Activated CD4-positive, alpha-beta T cell treated with anti-CD3 and anti-CD28 coated beads for 36 hours (primary cell): ENCODE measurements at regions of chr15 and their contacts with region 1.

Region 1: DNA sequence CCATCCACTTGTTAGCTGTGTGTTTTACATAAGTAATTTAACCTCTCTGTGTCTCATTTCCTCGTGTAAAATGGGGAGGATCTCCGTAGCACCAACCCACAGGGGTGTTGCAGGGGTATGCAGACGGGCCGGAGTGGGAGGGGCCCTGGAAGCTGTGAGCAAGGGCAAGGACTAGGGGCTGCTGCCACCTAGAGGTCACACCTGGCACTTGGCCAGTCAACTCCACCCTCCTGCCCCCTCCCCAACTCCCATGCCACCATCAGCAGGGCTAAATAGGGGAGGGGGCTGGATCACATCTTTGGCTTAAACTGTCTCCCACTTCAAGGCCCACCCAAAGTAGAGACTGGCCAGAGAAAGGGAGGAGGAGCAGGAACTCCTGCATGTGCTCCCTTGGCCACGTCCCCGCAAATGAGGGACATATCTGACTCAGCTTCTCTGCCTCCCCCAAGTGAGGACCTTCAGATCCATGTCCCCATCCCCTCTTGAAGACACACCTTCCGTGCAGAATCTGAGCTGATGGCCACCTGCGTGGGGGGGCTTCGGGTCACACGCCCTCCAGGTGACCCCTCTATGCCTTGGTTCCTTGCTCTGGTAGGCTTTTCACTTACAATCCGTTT is 2.6 kb downstream of the CCDC9B start:
- DNase-seq: peak; percentile 90
- ATAC-seq: peak; percentile 90
- H3K4me3 Mint-ChIP-seq: no peak overlapping the region
- H3K27ac Mint-ChIP-seq: no peak overlapping the region
- H3K4me1 Mint-ChIP-seq: peaks cover 16% of the 10 kb centered on the region
- H3K27me3 Mint-ChIP-seq: no peaks in the 10 kb centered on the region

Region 2: GRCh38 chr15:40307421-40308211 is 30.5 kb before region 1 on chr15 and contains the start of gene PLCB2:
- CTCF ChIA-PET with region 1: interaction called, 87 read pairs
- POLR2A ChIA-PET with region 1: no interaction called
- intact Hi-C with region 1: loop called (anchors 1 to 2 kb)
- DNase-seq: peak; percentile 83
- ATAC-seq: peak; percentile 79
- H3K4me3 Mint-ChIP-seq: peak within 1 kb of the TSS; percentile 91
- H3K27ac Mint-ChIP-seq: peak within 1 kb of the TSS; percentile 97
- H3K4me1 Mint-ChIP-seq: peaks cover 31% of the 10 kb centered on the region
- H3K27me3 Mint-ChIP-seq: no peaks in the 10 kb centered on the region
- total RNA-seq, gene PLCB2: 67.9 to 86.8 TPM

Region 3: DNA sequence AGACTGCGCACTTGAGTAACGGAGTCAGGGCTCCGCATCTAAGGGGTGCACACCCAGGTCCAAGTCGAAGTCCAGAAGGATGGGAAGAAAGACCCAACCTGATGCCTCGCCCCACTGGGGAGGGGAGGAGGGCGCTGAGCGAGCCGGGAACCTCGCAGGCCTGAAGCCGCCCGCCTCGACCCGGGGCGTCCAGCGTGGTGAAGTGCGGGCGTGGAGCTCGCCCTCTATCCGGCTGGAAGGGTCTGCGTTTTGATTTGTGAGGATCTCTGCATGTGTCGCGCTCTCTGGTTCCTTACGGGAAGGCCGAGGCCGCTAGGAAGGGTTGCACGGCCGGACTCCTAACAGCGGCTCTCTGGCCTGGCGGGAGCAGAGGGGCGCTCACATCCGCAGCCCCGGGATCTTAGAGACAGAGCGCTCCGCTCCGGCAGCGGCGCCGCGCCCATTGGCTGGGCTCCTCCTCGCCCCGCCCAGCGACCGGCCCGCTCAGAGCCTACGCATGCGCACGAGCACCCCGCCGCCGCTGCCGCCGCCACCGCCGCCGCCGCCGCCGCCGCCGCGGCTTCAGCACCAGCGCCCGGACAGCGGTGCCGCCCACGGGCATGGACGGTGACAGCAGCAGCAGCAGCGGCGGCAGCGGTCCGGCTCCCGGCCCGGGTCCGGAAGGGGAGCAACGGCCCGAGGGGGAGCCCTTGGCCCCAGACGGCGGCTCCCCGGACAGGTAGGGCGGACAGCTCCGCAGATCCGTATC is 19.7 kb after region 1 on chr15 and contains the start of gene DISP2:
- CTCF ChIA-PET with region 1: interaction called, 10 read pairs
- POLR2A ChIA-PET with region 1: no interaction called
- intact Hi-C with region 1: no loop called
- DNase-seq: peak; percentile 93
- ATAC-seq: peak; percentile 94
- H3K4me3 Mint-ChIP-seq: peak within 1 kb of the TSS; percentile 67
- H3K27ac Mint-ChIP-seq: peak within 1 kb of the TSS; percentile 20
- H3K4me1 Mint-ChIP-seq: peaks cover 3% of the 10 kb centered on the region
- H3K27me3 Mint-ChIP-seq: peaks cover 7% of the 10 kb centered on the region
- total RNA-seq, gene DISP2: 0.02 to 0.04 TPM

Region 4: GRCh38 chr15:40421246-40422157 is 83.4 kb after region 1 on chr15:
- CTCF ChIA-PET with region 1: interaction called, 151 read pairs
- POLR2A ChIA-PET with region 1: no interaction called
- intact Hi-C with region 1: no loop called
- DNase-seq: peak; percentile 91
- ATAC-seq: peak; percentile 98
- H3K4me3 Mint-ChIP-seq: no peak overlapping the region
- H3K27ac Mint-ChIP-seq: no peak overlapping the region
- H3K4me1 Mint-ChIP-seq: no peaks in the 10 kb centered on the region
- H3K27me3 Mint-ChIP-seq: no peaks in the 10 kb centered on the region